CD8-positive, alpha-beta T cell (primary cell): ENCODE measurements at regions of chr13 and their contacts with region 1.

Region 1: GRCh38 chr13:112643759-112644459 is 45.9 kb upstream of the ATP11A start:
- DNase-seq: no peak
- ATAC-seq: no peak
- H3K4me3 ChIP-seq: no peak overlapping the region
- H3K4me3 Mint-ChIP-seq: no peak overlapping the region
- H3K27ac ChIP-seq: no peak overlapping the region
- H3K27ac Mint-ChIP-seq: no peak overlapping the region
- H3K4me1 ChIP-seq: no peaks in the 10 kb centered on the region
- H3K4me1 Mint-ChIP-seq: peaks cover 11% of the 10 kb centered on the region
- H3K27me3 ChIP-seq: no peaks in the 10 kb centered on the region
- H3K27me3 Mint-ChIP-seq: peaks cover 21% of the 10 kb centered on the region
- CTCF ChIP-seq: no peak

Region 2: DNA sequence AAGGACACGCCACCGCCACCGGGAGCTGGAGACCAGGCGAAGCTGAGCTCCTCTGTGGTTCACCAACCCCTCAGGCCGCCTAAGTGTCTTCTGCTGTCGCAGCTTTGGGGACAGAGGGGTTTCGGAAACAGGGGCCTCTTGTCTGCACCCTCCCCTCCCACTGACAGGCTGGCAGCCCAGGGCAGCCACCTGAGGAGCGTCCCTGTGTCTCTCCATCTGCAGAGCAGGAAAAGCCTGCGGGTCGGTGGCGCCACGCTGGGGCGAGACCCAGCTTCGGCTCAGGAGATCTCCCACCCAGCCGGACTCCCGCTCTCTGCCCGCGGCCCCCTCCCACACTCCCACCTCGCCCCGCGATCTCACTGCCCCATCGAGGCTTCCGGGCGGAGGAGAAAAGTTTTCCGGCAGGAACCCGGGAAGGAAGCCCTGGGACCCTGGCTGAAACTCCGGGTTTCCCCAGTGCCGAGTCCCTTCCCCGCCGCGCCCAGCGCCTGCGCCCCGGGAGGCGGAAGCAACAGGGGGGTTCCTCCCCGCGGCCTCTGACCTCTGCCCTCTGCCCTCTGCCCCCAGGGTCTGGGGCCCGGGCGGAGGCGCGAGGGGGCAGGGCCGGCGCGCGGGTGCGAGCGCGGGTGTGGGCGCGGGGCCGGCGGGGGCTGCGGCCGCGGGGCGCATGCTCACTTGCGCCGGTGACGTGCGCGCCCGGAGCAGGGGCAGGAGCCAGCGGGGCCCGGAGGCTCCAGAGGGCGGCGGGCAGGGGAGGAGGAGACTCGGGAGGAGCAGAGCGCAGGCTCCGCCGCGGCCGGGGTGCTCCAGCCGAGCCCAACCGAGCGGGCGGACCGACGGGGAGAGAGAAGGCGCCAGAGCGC is 45.6 kb after region 1 on chr13 and contains the start of gene ATP11A:
- CTCF ChIA-PET with region 1: no interaction called
- POLR2A ChIA-PET with region 1: no interaction called
- intact Hi-C with region 1: loop called (anchors 2 to 5 kb)
- DNase-seq: peak; percentile 40 to 88 (median 70)
- ATAC-seq: peak; percentile 78
- H3K4me3 ChIP-seq: peak within 1 kb of the TSS; percentile 76 to 77
- H3K4me3 Mint-ChIP-seq: peak within 1 kb of the TSS; percentile 87
- H3K27ac ChIP-seq: peak within 1 kb of the TSS; percentile 38 to 88
- H3K27ac Mint-ChIP-seq: peak within 1 kb of the TSS; percentile 86
- H3K4me1 ChIP-seq: peaks cover 24% of the 10 kb centered on the region
- H3K4me1 Mint-ChIP-seq: peaks cover 52% of the 10 kb centered on the region
- H3K27me3 ChIP-seq: no peaks in the 10 kb centered on the region
- H3K27me3 Mint-ChIP-seq: no peaks in the 10 kb centered on the region
- CTCF ChIP-seq: no peak
- total RNA-seq, gene ATP11A: 20.7 to 22.1 TPM

Region 3: DNA sequence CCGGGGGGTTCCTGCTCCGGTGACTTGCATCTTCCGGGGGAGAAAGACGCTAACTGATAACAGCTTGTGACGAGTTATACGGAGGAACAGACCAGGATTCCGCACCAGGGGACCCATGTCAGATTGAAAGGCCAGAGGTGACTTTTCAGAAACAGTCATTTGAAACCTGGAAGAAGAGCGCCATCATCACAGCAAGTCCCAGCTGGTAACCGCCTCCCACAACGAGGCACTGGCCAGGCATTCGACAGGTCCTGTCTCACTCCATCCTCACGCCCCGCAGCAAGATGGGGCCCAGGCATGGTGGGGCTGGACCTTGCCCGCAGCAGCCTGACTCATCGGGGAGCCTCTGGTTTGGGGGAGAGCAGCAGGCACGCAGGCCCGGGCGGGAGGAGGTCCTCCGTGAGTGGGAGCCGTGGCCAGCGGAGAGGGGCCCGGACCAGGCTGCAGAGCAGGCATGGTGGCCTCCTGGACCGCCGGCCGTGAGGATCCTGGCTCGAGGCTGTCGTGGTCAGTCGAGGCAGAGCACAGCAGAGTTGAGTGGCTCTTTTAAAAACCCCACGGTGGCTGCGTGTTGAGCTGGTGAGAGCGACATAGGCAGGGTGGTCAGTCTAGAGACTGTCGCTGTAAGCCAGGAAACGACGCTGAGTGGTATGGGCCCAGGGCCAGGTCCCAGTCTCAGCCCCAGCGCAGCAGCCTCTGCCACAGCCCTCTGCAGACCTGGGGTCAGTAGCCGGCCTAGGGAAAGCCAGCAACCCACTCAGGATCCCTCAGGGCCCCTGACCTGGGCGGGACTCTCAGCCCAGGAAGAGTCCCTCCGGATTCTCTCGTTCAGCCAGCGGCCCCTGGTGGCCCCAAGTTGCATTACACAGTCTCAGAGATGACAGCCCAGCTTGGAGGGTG is 230.2 kb after region 1 on chr13:
- CTCF ChIA-PET with region 1: interaction called, 4 read pairs
- POLR2A ChIA-PET with region 1: no interaction called
- intact Hi-C with region 1: loop called (anchors 2 to 5 kb)
- DNase-seq: peak in 8 of 9 experiments; percentile 26 to 89 (median 54)
- ATAC-seq: peak; percentile 72
- H3K4me3 ChIP-seq: no peak overlapping the region
- H3K4me3 Mint-ChIP-seq: peak overlapping the region; percentile 29
- H3K27ac ChIP-seq: peak overlapping the region; percentile 37 to 83
- H3K27ac Mint-ChIP-seq: peak overlapping the region; percentile 88
- H3K4me1 ChIP-seq: peaks cover 24% of the 10 kb centered on the region
- H3K4me1 Mint-ChIP-seq: peaks cover 25% of the 10 kb centered on the region
- H3K27me3 ChIP-seq: no peaks in the 10 kb centered on the region
- H3K27me3 Mint-ChIP-seq: no peaks in the 10 kb centered on the region
- CTCF ChIP-seq: peak; percentile 49

Region 4: DNA sequence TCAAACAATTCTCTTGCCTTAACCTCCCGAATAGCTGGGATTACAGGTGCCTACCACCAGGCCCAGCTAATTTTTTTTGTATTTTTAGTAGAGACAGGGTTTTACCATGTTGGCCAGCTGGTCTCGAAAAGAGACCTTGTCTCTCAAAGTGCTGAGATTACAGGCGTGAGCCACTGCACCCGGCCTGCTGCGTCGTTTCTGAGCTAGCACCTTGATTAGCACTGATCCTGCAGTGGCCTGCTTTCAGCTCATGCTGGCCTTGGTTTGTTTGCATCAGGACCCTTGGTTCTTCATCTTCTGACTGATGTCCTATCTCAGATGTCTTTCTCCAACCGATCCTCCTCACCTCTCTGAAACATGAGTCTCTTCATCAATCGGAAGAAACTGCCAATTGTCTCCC is 935.8 kb after region 1 on chr13:
- CTCF ChIA-PET with region 1: no interaction called
- POLR2A ChIA-PET with region 1: no interaction called
- intact Hi-C with region 1: no loop called
- DNase-seq: peak in 1 of 9 experiments; percentile 7
- ATAC-seq: no peak
- H3K4me3 ChIP-seq: no peak overlapping the region
- H3K4me3 Mint-ChIP-seq: no peak overlapping the region
- H3K27ac ChIP-seq: no peak overlapping the region
- H3K27ac Mint-ChIP-seq: no peak overlapping the region
- H3K4me1 ChIP-seq: no peaks in the 10 kb centered on the region
- H3K4me1 Mint-ChIP-seq: peaks cover 3% of the 10 kb centered on the region
- H3K27me3 ChIP-seq: no peaks in the 10 kb centered on the region
- H3K27me3 Mint-ChIP-seq: no peaks in the 10 kb centered on the region
- CTCF ChIP-seq: no peak